Endothelial cell of umbilical vein (primary cell): ENCODE measurements at regions of chr6 and their contacts with region 1.

Region 1: DNA sequence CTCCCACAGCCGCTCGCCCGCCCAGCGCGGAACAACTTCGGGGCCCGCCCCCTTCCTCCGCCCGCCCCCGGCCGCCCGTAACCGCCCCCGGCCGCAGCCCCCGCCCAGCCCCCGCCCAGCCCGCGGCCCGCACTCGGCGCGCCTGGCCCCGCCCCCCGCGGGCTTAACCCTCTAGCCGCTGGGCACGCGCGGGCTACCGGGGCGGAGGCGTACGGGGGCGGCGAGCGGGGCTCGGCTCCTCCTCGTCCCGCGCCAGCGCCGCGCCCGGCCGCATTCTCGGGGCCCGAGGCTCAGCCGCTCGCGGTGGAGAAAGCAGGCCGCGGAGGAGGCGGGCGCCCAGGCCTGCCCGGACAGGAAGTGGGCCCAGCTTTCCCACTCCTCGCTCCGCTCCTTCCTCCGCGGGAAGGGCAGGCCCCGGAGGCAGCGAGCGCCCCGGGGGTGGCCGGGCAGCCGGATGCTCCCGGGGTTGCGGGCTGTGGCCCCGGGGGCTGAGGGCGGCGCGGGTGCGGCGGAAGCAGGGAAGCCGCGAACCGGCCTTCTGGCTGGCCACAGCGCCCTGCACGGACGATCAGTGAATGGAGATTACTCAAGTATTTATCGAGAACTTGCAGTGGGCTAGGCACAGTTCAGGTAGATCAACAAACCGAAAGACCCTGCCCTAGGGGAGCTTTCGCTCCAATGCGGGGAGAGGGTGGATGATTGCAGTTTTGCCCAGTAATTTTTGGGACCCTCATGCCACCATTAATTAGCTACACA is at the start of gene TRAM2:
- DNase-seq: peak; percentile 75
- H3K4me3 ChIP-seq: peak within 1 kb of the TSS; percentile 65 to 85 (median 67)
- H3K27ac ChIP-seq: peak within 1 kb of the TSS; percentile 67
- H3K4me1 ChIP-seq: peaks cover 38% of the 10 kb centered on the region
- H3K27me3 ChIP-seq: no peaks in the 10 kb centered on the region
- CTCF ChIP-seq: no peak
- POLR2A ChIP-seq: peak; percentile 76
- total RNA-seq, gene TRAM2: 85.9 and 98.6 TPM in 2 replicates

Region 2: DNA sequence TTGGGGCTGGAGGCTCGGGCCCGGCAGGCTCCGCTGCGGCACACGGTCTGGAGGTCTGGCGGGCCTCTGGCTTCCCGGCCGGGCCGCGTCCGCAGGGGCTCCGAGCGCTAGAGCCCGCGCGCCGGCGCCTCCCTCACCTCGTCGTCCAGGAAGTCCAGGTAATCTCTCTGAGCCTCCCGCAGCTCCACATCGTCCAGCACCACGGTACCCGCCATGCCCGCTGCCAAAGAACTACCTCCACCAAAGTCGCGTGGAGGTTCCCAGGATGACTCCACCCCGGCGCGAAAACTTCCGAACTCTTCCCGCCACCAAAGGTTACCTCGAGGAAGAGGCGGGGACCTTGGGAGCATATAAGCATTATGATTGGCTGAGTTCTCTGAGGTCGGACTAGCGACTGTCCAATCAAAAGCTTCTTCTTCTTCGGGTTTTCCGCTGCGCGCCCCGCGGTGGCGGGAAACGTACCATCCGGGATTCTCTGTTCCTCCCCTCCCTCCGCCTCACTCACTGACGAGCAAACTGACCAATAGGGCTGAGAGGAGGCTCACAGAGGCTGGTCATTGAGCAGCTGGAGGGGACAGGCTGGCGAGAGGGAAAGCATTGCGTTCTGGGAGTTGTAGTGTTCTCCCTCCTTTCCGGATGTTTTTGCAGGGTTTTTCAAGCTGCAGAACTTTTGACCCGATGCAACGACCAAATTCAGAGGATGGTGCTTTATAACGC is 292.6 kb before region 1 on chr6 and contains the start of gene MCM3:
- CTCF ChIA-PET with region 1: no interaction called
- POLR2A ChIA-PET with region 1: no interaction called
- dilution Hi-C with region 1: no loop called
- intact Hi-C with region 1: loop called (anchors 10 kb)
- DNase-seq: peak; percentile 100
- H3K4me3 ChIP-seq: peak within 1 kb of the TSS; percentile 59 to 92 (median 71)
- H3K27ac ChIP-seq: peak within 1 kb of the TSS; percentile 51
- H3K4me1 ChIP-seq: peaks cover 15% of the 10 kb centered on the region
- H3K27me3 ChIP-seq: no peaks in the 10 kb centered on the region
- CTCF ChIP-seq: no peak
- POLR2A ChIP-seq: peak; percentile 47
- total RNA-seq, gene MCM3: 80.6 and 81.6 TPM in 2 replicates

Region 3: GRCh38 chr6:52361945-52362442 is 215.2 kb before region 1 on chr6 and contains the start of gene PAQR8:
- CTCF ChIA-PET with region 1: no interaction called
- POLR2A ChIA-PET with region 1: no interaction called
- dilution Hi-C with region 1: no loop called
- intact Hi-C with region 1: no loop called
- DNase-seq: peak; percentile 66
- H3K4me3 ChIP-seq: peak within 1 kb of the TSS; percentile 78 to 97 (median 88)
- H3K27ac ChIP-seq: peak within 1 kb of the TSS; percentile 41
- H3K4me1 ChIP-seq: peaks cover 12% of the 10 kb centered on the region
- H3K27me3 ChIP-seq: no peaks in the 10 kb centered on the region
- CTCF ChIP-seq: no peak
- POLR2A ChIP-seq: peak; percentile 42
- total RNA-seq, gene PAQR8: 6.0 TPM in 2 replicates

Region 4: GRCh38 chr6:52491203-52492069 is 85.8 kb before region 1 on chr6:
- CTCF ChIA-PET with region 1: interaction called, 3 read pairs
- POLR2A ChIA-PET with region 1: no interaction called
- dilution Hi-C with region 1: no loop called
- intact Hi-C with region 1: loop called (anchors 1 kb)
- DNase-seq: peak; percentile 44
- H3K4me3 ChIP-seq: no peak overlapping the region
- H3K27ac ChIP-seq: peak overlapping the region; percentile 65
- H3K4me1 ChIP-seq: peaks cover 35% of the 10 kb centered on the region
- H3K27me3 ChIP-seq: no peaks in the 10 kb centered on the region
- CTCF ChIP-seq: no peak
- POLR2A ChIP-seq: no peak

Region 5: GRCh38 chr6:52512199-52512598 is 65.0 kb before region 1 on chr6:
- CTCF ChIA-PET with region 1: interaction called, 9 read pairs
- POLR2A ChIA-PET with region 1: no interaction called
- dilution Hi-C with region 1: no loop called
- intact Hi-C with region 1: loop called (anchors 1 kb)
- DNase-seq: peak; percentile 92
- H3K4me3 ChIP-seq: no peak overlapping the region
- H3K27ac ChIP-seq: peak overlapping the region; percentile 89
- H3K4me1 ChIP-seq: peaks cover 64% of the 10 kb centered on the region
- H3K27me3 ChIP-seq: no peaks in the 10 kb centered on the region
- CTCF ChIP-seq: no peak
- POLR2A ChIP-seq: no peak

Region 6: GRCh38 chr6:52537001-52537753 is 40.0 kb before region 1 on chr6:
- CTCF ChIA-PET with region 1: interaction called, 12 read pairs
- POLR2A ChIA-PET with region 1: no interaction called
- dilution Hi-C with region 1: no loop called
- intact Hi-C with region 1: loop called (anchors 1 kb)
- DNase-seq: peak; percentile 78
- H3K4me3 ChIP-seq: no peak overlapping the region
- H3K27ac ChIP-seq: peak overlapping the region; percentile 74
- H3K4me1 ChIP-seq: peaks cover 83% of the 10 kb centered on the region
- H3K27me3 ChIP-seq: no peaks in the 10 kb centered on the region
- CTCF ChIP-seq: no peak
- POLR2A ChIP-seq: peak; percentile 9

Region 7: DNA sequence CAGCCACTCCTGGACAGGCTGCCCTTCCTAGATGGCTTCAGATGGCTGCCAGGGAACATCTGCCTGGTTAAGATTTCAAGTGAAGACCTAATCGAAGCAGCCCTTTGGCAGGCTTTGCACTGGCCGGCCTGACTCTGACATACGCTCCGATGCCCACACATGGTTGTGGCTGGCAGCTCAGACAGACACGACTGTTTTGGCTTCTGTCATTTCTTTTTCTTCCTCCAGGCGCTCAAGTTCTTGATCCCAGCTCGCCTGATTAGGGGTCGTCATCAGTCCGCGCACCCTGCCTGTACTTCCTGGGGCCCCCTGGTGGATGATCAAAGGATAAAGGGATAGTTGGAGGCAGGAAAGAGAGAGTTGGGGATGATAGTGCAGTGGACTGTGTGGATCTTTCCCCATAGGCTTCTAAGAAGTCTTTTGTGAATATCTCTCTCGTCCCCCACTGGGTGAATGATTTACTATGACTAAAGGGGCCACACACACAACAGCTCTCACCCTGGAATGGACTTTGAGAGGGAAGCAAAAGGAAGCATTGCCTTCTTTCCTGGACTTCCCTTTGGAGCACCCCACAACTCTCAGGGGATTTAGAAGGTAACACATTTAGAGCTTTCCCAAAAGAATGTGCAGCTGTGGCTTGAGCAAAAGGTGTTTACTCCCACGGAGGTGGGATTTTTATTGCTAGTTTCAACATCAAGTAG is 21.1 kb after region 1 on chr6:
- CTCF ChIA-PET with region 1: interaction called, 20 read pairs
- POLR2A ChIA-PET with region 1: interaction called, 3 read pairs
- dilution Hi-C with region 1: no loop called
- intact Hi-C with region 1: loop called (anchors 1 kb)
- DNase-seq: peak; percentile 54
- H3K4me3 ChIP-seq: no peak overlapping the region
- H3K27ac ChIP-seq: no peak overlapping the region
- H3K4me1 ChIP-seq: peaks cover 34% of the 10 kb centered on the region
- H3K27me3 ChIP-seq: no peaks in the 10 kb centered on the region
- CTCF ChIP-seq: peak; percentile 63 to 75
- POLR2A ChIP-seq: no peak

Region 8: GRCh38 chr6:52664186-52664990 is 87.2 kb after region 1 on chr6:
- CTCF ChIA-PET with region 1: interaction called, 18 read pairs
- POLR2A ChIA-PET with region 1: no interaction called
- dilution Hi-C with region 1: no loop called
- intact Hi-C with region 1: loop called (anchors 1 kb)
- DNase-seq: peak; percentile 95
- H3K4me3 ChIP-seq: peak overlapping the region; percentile 46 to 92 (median 54)
- H3K27ac ChIP-seq: peak overlapping the region; percentile 39
- H3K4me1 ChIP-seq: peaks cover 15% of the 10 kb centered on the region
- H3K27me3 ChIP-seq: no peaks in the 10 kb centered on the region
- CTCF ChIP-seq: no peak
- POLR2A ChIP-seq: peak; percentile 96

Region 9: DNA sequence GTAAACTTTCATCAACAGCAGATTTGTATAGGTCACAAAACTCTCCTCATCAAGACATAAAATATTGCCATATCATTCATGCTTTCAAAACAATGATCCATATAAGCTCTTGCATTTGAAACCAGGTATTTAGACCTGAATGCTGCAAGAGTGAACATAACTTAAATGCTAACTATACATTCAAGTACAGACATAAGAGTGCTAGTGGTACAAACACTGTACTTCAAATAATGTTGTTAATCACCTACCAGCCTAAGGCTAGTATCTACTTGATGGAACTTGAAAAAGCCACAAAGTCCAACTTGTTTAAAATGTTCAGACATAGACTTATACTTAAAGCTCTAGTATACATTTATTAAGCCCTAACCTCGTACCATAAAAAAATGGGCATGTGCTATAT is 202.0 kb after region 1 on chr6:
- CTCF ChIA-PET with region 1: no interaction called
- POLR2A ChIA-PET with region 1: no interaction called
- dilution Hi-C with region 1: no loop called
- intact Hi-C with region 1: no loop called
- DNase-seq: no peak
- H3K4me3 ChIP-seq: no peak overlapping the region
- H3K27ac ChIP-seq: no peak overlapping the region
- H3K4me1 ChIP-seq: no peaks in the 10 kb centered on the region
- H3K27me3 ChIP-seq: peaks cover 0 to 2% of the 10 kb centered on the region in 2 experiments
- CTCF ChIP-seq: no peak
- POLR2A ChIP-seq: no peak